ENCODE measurements at regions of chr17 and their contacts with region 1.

Region 1: GRCh38 chr17:7435221-7435675 is at the start of gene TMEM102:
- DNase-seq: peak; percentile 98
- H3K4me3 Mint-ChIP-seq: peak within 1 kb of the TSS; percentile 85
- H3K27ac Mint-ChIP-seq: peak within 1 kb of the TSS; percentile 95
- H3K4me1 Mint-ChIP-seq: peaks cover 28% of the 10 kb centered on the region
- H3K27me3 Mint-ChIP-seq: peaks cover 10% of the 10 kb centered on the region
- total RNA-seq, gene TMEM102: 13.4 and 14.8 TPM in 2 replicates

Region 2: GRCh38 chr17:7351665-7352501 is 83.4 kb before region 1 on chr17 and contains the start of gene KCTD11:
- intact Hi-C with region 1: loop called (anchors 1 kb)
- DNase-seq: peak; percentile 74
- H3K4me3 Mint-ChIP-seq: peak within 1 kb of the TSS; percentile 90
- H3K27ac Mint-ChIP-seq: peak within 1 kb of the TSS; percentile 87
- H3K4me1 Mint-ChIP-seq: peaks cover 32% of the 10 kb centered on the region
- H3K27me3 Mint-ChIP-seq: no peaks in the 10 kb centered on the region
- total RNA-seq, gene KCTD11: 8.0 and 8.5 TPM in 2 replicates

Region 3: GRCh38 chr17:7393613-7394451 is 41.4 kb before region 1 on chr17:
- intact Hi-C with region 1: no loop called
- DNase-seq: peak; percentile 28
- H3K4me3 Mint-ChIP-seq: peak overlapping the region; percentile 94
- H3K27ac Mint-ChIP-seq: peak overlapping the region; percentile 83
- H3K4me1 Mint-ChIP-seq: peaks cover 15% of the 10 kb centered on the region
- H3K27me3 Mint-ChIP-seq: no peaks in the 10 kb centered on the region

Region 4: GRCh38 chr17:7403977-7404736 is 31.1 kb before region 1 on chr17 and contains the start of gene TMEM256:
- intact Hi-C with region 1: loop called (anchors 1 kb)
- DNase-seq: peak; percentile 95
- H3K4me3 Mint-ChIP-seq: peak within 1 kb of the TSS; percentile 87
- H3K27ac Mint-ChIP-seq: peak within 1 kb of the TSS; percentile 92
- H3K4me1 Mint-ChIP-seq: peaks cover 11% of the 10 kb centered on the region
- H3K27me3 Mint-ChIP-seq: peaks cover 13% of the 10 kb centered on the region
- total RNA-seq, gene TMEM256: 67.3 and 67.7 TPM in 2 replicates

Region 5: GRCh38 chr17:7454980-7455379 is 19.7 kb after region 1 on chr17:
- intact Hi-C with region 1: loop called (anchors 1 kb)
- DNase-seq: no peak
- H3K4me3 Mint-ChIP-seq: peak overlapping the region; percentile 91
- H3K27ac Mint-ChIP-seq: peak overlapping the region; percentile 93
- H3K4me1 Mint-ChIP-seq: peaks cover 18% of the 10 kb centered on the region
- H3K27me3 Mint-ChIP-seq: no peaks in the 10 kb centered on the region

Region 6: DNA sequence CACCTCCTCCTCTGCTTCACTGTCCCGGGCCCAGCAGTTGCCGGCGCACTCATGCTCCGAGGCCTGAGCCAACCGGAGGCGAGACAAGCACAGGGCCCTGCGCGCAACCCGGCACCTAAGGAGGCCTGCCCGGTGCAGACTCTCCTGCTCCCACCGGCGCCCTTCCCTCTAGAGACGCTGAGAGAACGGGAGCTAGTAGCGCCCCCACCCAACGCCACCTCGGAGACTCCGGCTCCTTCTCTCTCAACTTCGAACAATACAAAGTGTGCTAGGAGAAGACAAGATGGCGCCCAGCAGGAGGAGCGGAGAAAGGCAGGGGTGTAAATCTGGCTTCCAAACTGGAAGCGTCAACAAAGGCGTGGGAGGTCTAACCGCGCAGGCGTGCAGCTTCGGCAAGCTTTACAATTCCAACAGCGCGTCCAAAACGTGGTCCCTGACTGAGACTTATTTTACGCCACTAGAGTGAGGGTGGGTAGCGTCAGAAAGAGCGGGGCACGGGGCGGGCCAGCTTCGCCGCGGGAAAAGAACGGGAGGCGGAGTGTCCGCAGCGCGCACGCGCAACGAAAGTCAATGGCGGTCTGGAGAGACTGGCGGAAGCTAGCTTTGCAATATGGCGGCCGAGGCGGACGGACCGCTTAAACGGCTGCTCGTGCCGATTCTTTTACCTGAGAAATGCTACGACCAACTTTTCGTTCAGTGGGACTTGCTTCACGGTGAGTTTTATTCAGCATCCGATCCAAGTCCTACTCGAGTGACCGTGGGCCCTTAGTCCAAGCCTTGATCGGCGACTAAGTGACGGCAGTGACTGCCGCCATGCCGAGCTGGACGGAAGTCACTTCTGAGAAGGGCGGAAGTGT is 148.2 kb after region 1 on chr17 and contains the start of gene MPDU1:
- intact Hi-C with region 1: no loop called
- DNase-seq: peak; percentile 97
- H3K4me3 Mint-ChIP-seq: peak within 1 kb of the TSS; percentile 95
- H3K27ac Mint-ChIP-seq: peak within 1 kb of the TSS; percentile 100
- H3K4me1 Mint-ChIP-seq: peaks cover 43% of the 10 kb centered on the region
- H3K27me3 Mint-ChIP-seq: no peaks in the 10 kb centered on the region
- total RNA-seq, gene MPDU1: 98.6 and 106 TPM in 2 replicates

Region 7: DNA sequence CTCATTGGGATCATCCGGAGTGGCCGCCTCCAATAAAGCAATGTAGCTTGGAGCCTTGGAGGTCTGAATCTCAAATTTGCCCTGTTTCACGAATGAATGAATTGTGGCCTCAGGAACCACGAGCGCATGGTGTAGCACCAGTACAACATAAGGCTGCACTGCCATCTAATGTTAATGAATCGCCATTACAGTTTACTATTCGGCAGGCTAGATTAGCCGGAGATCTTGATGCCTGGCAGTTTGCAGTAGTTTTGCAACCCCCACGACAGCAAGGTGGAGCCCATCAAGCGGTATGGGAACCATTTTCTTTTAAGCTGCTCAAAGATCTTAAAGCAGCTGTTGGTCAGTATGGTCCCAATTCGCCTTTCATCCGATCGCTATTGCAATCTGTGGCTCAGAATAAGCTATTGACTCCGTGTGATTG is 622.5 kb after region 1 on chr17:
- intact Hi-C with region 1: loop called (anchors 5 kb)
- DNase-seq: peak; percentile 30
- H3K4me3 Mint-ChIP-seq: no peak overlapping the region
- H3K27ac Mint-ChIP-seq: no peak overlapping the region
- H3K4me1 Mint-ChIP-seq: peaks cover 26% of the 10 kb centered on the region
- H3K27me3 Mint-ChIP-seq: peaks cover 47% of the 10 kb centered on the region

Measured in activated T-helper 2 cell treated with anti-CD3 and anti-CD28 coated beads, Interferon-gamma antibody, Interleukin-2, Interleukin-4, amounts not matched to agents 10 μg/mL and 5 μg/mL and 100 μg/mL, durations not matched to agents 14 hours and 24 hours and 36 hours (primary cell).